ENCODE measurements at regions of chr18 and their contacts with region 1.

Region 1: DNA sequence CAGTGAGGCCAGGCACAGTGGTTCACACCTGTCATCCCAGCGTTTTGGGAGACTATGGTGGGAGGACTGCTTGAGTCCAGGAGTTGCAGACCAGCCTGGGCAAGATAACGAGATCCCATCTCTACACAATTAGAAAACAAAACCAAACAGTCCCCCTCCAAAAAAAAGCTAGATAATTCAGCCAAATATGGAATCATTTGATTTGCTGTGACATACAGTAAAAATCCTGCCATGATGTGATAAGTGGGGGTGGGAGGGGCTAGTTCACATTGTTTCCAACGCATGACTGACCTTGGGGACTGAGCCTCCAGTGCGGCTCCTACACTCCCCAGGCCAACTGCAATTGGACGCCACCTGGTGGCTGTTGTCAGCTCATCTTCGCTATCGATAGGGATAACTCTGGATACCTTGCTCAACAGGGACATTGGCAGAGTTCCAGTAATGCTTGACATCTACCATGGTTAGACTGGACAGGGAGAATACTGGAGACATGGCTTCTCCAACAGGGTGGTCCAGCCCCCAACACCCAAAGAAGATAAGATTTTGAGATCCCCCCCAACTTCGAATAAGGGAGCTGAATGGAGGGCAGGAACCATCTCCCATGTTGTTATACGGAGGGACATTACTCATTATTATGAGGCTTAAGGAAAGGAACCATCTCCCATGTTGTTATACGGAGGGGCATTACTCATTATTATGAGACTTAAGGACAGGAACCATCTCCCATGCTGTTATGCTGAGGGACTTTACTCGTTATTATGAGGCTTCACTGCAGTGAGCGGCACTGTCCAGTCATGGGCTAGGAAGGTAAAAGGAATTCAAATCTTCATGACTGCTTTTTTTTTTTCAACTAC is 135.9 kb downstream of the TGIF1 start:
- DNase-seq: peak; percentile 87 to 91 (median 89)
- ATAC-seq: peak; percentile 99 to 100 (median 100)
- H3K4me3 ChIP-seq: no peak overlapping the region
- H3K27ac ChIP-seq: no peak overlapping the region
- H3K4me1 ChIP-seq: no peaks in the 10 kb centered on the region
- H3K27me3 ChIP-seq: no peaks in the 10 kb centered on the region
- CTCF ChIP-seq: peak; percentile 74 to 87 (median 86)
- POLR2A ChIP-seq: no peak

Region 2: DNA sequence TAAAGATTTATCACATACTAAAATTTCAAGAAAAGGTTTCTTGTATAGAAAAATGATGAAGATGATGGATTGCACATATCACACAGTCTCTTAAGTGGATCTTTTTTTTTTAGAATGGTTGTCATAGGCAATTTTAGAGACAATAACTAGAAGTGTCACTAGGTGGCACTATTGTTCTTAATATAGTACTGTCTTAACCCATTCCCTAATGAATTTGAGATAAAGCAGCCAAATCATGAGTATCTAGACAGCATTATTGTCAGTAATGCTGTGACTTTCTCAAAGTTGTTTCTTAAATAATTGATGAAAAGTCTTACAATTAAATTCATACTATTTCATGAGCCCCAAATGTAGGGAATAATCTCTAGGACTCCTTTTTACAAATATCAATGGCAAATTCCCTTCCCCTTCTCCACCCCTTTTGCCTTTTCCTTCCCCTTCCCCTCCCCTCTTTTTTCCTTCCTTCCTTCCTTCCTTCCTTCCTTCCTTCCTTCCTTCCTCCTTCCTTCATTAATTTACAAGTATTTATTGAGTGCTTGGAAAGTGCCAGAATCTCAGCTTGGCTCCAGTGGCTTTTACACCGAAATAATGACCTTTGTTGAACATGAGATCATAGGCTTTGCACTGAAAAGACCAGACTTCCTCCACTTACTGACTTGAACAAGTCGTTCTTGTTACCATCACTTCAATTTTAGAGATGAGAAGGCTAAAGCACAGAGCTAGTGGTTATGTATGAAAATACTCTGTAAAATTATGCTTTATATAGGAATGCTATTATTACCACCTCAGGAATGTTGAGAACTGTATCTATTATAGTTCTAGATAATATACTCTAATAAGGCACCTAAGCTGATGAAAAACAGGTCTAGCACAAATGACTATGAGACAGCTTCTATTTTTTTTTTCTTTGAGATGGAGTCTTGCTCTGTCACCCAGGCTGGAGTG is 304.2 kb before region 1 on chr18:
- intact Hi-C with region 1: loop called in 1 of 2 experiments (anchors 10 kb)
- DNase-seq: no peak
- ATAC-seq: peak; percentile 84 to 92 (median 86)
- H3K4me3 ChIP-seq: no peak overlapping the region
- H3K27ac ChIP-seq: no peak overlapping the region
- H3K4me1 ChIP-seq: no peaks in the 10 kb centered on the region
- H3K27me3 ChIP-seq: no peaks in the 10 kb centered on the region
- CTCF ChIP-seq: peak; percentile 62 to 72 (median 70)
- POLR2A ChIP-seq: no peak